ENCODE measurements at regions of chr16 and their contacts with region 1.

Region 1: DNA sequence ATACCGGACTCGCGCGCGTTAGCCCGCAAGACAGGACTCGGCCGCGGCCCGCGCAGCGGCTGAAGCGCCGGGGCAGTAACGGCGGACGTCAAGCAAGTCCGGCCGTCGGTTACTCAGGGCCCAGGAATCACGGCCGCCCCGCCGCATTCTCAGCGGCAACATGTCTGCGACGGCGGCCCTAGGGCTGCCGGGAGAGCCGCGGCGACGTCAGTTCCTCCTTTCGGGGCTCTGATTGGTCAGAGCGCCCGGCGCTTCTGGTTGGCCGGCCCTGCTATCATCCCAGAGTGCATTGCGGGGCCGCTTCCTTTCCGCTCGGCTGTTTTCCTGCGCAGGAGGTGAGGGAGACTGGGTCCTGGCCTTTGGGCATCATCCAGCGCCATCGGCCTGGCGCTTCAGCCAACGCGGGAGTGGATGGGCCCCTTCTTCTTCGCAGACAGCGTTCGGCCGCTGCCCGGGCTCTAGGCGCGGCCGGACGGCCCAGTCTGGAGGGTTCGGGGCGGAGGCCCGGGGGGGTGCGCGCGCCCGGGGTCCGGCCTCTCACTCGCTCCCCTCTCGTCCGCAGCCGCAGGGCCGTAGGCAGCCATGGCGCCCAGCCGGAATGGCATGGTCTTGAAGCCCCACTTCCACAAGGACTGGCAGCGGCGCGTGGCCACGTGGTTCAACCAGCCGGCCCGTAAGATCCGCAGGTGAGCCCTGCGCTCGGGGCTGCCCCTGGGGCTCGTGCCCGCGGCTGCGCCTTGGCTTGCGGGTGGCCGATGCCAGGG is at the start of gene RPL13:
- DNase-seq: peak; percentile 81 to 92
- H3K4me3 ChIP-seq: peak within 1 kb of the TSS; percentile 69 to 97 (median 82)
- H3K27ac ChIP-seq: peak within 1 kb of the TSS; percentile 79
- H3K4me1 ChIP-seq: peaks cover 5 to 28% (median 8%) of the 10 kb centered on the region in 4 experiments
- H3K27me3 ChIP-seq: no peaks in the 10 kb centered on the region
- CTCF ChIP-seq: no peak
- EP300 ChIP-seq: no peak
- POLR2A ChIP-seq: peak; percentile 99
- RAD21 ChIP-seq: no peak
- total RNA-seq, gene RPL13: 2,162 and 2,205 TPM in 2 replicates

Region 2: DNA sequence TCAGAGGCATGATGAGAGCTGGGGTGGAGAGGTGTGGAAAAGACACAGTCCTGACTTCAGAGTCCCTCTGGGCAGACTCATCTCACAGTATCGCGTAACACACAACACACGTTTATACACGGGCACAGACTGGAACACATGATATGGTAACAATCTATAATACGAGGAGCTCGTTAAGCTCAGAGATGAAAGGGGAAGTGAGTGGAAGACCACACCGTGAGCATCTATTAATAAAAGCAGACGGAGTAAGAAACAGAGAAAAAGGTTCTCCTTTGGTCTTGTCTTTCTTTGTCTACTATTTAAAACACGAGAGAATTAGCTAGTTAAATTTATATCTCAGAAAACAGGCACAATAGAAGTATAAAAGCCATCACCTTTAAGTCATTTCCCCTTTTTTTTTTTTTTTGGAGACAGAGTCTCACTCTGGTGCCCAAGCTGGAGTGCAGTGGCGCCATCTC is 83.7 kb before region 1 on chr16:
- CTCF ChIA-PET with region 1: no interaction called
- POLR2A ChIA-PET with region 1: no interaction called
- DNase-seq: no peak
- H3K4me3 ChIP-seq: no peak overlapping the region
- H3K27ac ChIP-seq: no peak overlapping the region
- H3K4me1 ChIP-seq: peaks cover 3 to 17% (median 10%) of the 10 kb centered on the region in 4 experiments
- H3K27me3 ChIP-seq: no peaks in the 10 kb centered on the region
- CTCF ChIP-seq: no peak
- EP300 ChIP-seq: no peak
- POLR2A ChIP-seq: no peak
- RAD21 ChIP-seq: no peak

Region 3: GRCh38 chr16:89574681-89575246 is 14.2 kb after region 1 on chr16:
- CTCF ChIA-PET with region 1: interaction called, 5 read pairs
- POLR2A ChIA-PET with region 1: interaction called, 22 read pairs
- DNase-seq: peak in 1 of 2 experiments; percentile 92
- H3K4me3 ChIP-seq: peak overlapping the region; percentile 46 to 76 (median 60)
- H3K27ac ChIP-seq: no peak overlapping the region
- H3K4me1 ChIP-seq: peaks cover 0 to 10% (median 6%) of the 10 kb centered on the region in 4 experiments; a peak in 5 of 7 replicates
- H3K27me3 ChIP-seq: peaks cover 4 to 34% (median 22%) of the 10 kb centered on the region in 4 experiments; a peak in 6 of 7 replicates
- CTCF ChIP-seq: peak; percentile 84 to 97 (median 96)
- EP300 ChIP-seq: no peak
- POLR2A ChIP-seq: no peak
- RAD21 ChIP-seq: peak; percentile 71 to 86